Heart left ventricle (tissue), 16 donors: ENCODE measurements at regions of chr6 and their contacts with region 1.

Region 1: GRCh38 chr6:160041608-160042007 is 72.7 kb downstream of the IGF2R start:
- DNase-seq: peak in 4 of 5 donors; percentile 38 to 84 (median 66)
- ATAC-seq: peak; percentile 78 to 93 (median 84)
- H3K4me3 ChIP-seq: no peak overlapping the region
- H3K27ac ChIP-seq: no peak overlapping the region
- H3K4me1 ChIP-seq: peaks cover 0 to 51% (median 14%) of the 10 kb centered on the region in 12 donors
- H3K27me3 ChIP-seq: no peaks in the 10 kb centered on the region
- CTCF ChIP-seq: peak in 5 of 12 donors; percentile 21 to 33 (median 31)
- POLR2A ChIP-seq: no peak

Region 2: DNA sequence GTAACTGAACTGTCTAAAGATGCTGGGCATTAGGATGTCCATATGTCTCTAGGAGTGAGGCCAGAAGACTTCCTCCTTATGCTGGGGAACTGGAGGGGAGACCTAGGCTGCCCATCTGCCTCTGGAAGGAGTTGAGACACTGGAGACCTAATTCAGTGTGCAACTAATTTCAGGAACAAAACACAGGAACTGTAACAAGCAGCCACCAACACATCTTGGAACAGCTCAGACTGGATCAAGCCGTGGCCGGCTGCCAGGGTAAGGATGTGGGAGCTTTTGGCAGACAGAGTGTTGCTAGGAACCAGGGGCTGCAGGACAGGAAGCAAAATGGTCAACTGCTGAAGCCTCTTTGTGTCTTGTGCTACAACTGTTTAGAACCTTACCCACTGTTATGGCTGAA is 167.2 kb before region 1 on chr6:
- intact Hi-C with region 1: loop called in 5 of 10 experiments (anchors 10 kb)
- DNase-seq: peak; percentile 51 to 80 (median 57)
- ATAC-seq: peak in 3 of 4 donors; percentile 44 to 71 (median 63)
- H3K4me3 ChIP-seq: no peak overlapping the region
- H3K27ac ChIP-seq: no peak overlapping the region
- H3K4me1 ChIP-seq: peaks cover 0 to 8% (median 0%) of the 10 kb centered on the region in 12 donors
- H3K27me3 ChIP-seq: no peaks in the 10 kb centered on the region
- CTCF ChIP-seq: no peak
- POLR2A ChIP-seq: no peak

Region 3: DNA sequence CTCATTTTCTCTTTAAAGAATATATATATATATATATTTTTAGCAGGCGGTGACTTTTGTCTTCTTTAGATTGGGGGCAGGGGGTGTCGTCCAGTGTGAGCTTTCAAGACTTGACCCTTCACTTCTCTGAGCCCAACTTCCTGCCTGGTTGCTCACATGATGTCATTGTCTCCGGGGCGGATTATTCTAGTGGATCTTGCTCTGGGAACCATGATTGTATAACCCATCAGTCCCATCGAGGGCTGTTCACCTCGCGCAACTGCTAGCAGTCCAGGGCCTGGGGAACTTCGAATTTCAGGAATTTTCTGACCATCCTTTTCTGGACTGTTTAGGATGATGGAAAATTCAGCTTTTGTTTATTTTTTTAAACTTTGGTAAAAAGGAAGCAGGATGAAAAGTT is 71.7 kb before region 1 on chr6:
- intact Hi-C with region 1: loop called in 5 of 10 experiments (anchors 5 kb)
- DNase-seq: peak in 4 of 5 donors; percentile 58 to 74 (median 62)
- ATAC-seq: peak; percentile 30 to 85 (median 60)
- H3K4me3 ChIP-seq: peak overlapping the region; percentile 76 to 99 (median 94)
- H3K27ac ChIP-seq: peak overlapping the region; percentile 62 to 96 (median 92)
- H3K4me1 ChIP-seq: peaks cover 0 to 73% (median 41%) of the 10 kb centered on the region in 12 donors
- H3K27me3 ChIP-seq: no peaks in the 10 kb centered on the region
- CTCF ChIP-seq: no peak
- POLR2A ChIP-seq: no peak

Region 4: DNA sequence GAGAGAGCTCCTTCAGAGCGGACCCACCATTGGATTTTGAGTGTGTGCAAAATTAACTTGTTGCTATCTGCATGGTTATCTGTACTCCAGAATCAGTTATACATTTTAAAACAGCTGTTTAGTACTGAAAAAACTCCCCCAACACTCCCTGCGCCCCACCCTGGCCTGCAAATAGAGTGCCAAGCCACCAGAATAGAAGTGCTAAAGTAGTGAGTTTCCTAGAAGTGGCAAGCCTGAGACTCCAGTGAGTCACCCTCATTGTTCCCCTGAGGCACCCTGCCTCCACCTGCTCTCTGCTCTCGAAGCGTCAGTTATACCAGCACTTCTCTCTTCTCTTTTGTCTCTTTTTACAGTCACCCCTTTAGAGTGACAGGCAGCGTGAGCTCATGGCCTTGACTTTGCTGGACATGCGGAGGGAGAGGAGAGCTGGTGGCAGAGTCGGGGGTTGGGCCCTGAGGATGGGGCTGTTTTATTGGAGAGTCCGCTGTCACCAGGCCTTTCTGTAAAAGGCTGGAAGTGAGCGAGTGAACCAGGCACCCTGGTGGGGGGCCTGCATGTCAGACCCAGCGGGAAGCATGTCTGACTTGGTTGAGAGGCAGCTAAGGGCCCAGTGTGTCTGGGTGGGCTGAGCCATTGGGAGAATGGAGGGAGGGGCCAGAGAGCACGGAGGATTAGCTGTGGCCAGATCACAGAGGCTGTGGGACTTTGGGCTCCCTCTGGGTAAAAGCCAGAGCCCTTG is 62.3 kb before region 1 on chr6:
- intact Hi-C with region 1: loop called in 5 of 10 experiments (anchors 5 kb)
- DNase-seq: peak in 2 of 5 donors; percentile 47 to 70
- ATAC-seq: peak in 3 of 4 donors; percentile 39 to 71 (median 63)
- H3K4me3 ChIP-seq: no peak overlapping the region
- H3K27ac ChIP-seq: peak overlapping the region in 11 of 12 donors; percentile 59 to 86 (median 77)
- H3K4me1 ChIP-seq: peaks cover 21 to 98% (median 77%) of the 10 kb centered on the region in 12 donors
- H3K27me3 ChIP-seq: no peaks in the 10 kb centered on the region
- CTCF ChIP-seq: no peak
- POLR2A ChIP-seq: no peak

Region 5: DNA sequence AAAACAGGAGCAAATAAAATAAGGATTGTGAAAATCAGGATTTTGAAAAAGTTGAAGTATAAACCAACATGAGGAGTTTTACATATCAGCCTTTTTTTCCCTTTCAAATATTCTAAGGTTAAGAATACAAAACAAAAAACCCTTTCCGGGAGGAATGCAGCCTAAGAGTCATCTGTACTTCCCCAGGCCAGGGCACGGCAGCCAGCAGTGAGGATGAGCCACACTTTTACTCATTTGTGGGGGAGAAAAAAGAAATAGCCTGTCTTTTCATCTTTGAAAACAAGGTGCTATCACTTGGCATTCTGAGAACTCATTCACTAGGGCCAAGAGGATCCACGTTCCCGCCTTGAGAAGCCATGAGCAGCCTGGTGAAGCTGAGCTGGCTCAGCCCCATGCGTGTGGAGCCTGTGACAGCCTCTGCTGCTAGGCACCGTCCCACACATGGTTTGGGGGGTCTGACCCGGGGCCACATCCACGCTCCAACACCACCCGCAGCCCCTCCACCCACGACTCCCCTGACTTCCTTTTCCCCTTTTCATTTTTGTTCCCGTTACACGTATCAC is 91.2 kb after region 1 on chr6:
- intact Hi-C with region 1: no loop called
- DNase-seq: no peak
- ATAC-seq: no peak
- H3K4me3 ChIP-seq: no peak overlapping the region
- H3K27ac ChIP-seq: no peak overlapping the region
- H3K4me1 ChIP-seq: no peaks in the 10 kb centered on the region
- H3K27me3 ChIP-seq: no peaks in the 10 kb centered on the region
- CTCF ChIP-seq: no peak
- POLR2A ChIP-seq: no peak